ENCODE measurements at regions of chr5 and their contacts with region 1.

Region 1: DNA sequence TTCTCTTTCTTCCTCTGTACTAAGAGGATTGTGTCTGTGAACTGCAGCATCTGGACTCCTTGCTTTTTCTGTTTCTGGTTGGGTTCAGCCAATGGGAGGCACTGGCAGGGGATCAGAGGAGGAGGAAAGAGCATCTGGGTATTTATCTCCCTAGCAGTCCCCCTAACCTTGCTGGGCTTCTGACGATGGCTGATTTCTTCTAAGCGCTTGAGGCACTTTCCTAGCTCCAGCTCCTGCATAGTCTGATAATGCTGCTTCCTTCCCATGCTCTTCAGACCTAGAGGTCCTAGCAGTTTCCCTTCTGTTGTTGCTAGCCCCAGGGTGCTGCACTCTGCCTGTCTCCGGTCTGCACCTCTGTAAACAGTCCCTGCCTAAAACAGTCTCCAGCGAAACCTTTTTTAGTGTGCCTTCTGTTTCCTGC is 225.1 kb downstream of the PDZD2 start:
- DNase-seq: no peak
- H3K4me3 ChIP-seq: no peak overlapping the region
- H3K27ac ChIP-seq: no peak overlapping the region
- H3K4me1 ChIP-seq: peaks cover 13% of the 10 kb centered on the region
- H3K27me3 ChIP-seq: no peaks in the 10 kb centered on the region
- CTCF ChIP-seq: no peak
- POLR2A ChIP-seq: no peak

Region 2: GRCh38 chr5:31783086-31783645 is 80.8 kb before region 1 on chr5:
- CTCF ChIA-PET with region 1: no interaction called
- POLR2A ChIA-PET with region 1: interaction called, 11 read pairs
- dilution Hi-C with region 1: no loop called
- intact Hi-C with region 1: no loop called
- DNase-seq: no peak
- H3K4me3 ChIP-seq: no peak overlapping the region
- H3K27ac ChIP-seq: no peak overlapping the region
- H3K4me1 ChIP-seq: no peaks in the 10 kb centered on the region
- H3K27me3 ChIP-seq: no peaks in the 10 kb centered on the region
- CTCF ChIP-seq: no peak
- POLR2A ChIP-seq: no peak

Region 3: GRCh38 chr5:31934156-31934555 is 70.2 kb after region 1 on chr5:
- CTCF ChIA-PET with region 1: no interaction called
- POLR2A ChIA-PET with region 1: no interaction called
- dilution Hi-C with region 1: no loop called
- intact Hi-C with region 1: no loop called
- DNase-seq: no peak
- H3K4me3 ChIP-seq: no peak overlapping the region
- H3K27ac ChIP-seq: no peak overlapping the region
- H3K4me1 ChIP-seq: peaks cover 2% of the 10 kb centered on the region
- H3K27me3 ChIP-seq: no peaks in the 10 kb centered on the region
- CTCF ChIP-seq: no peak
- POLR2A ChIP-seq: no peak

Measured in endothelial cell of umbilical vein (primary cell).